Left colon (tissue), 2 donors: ENCODE measurements at regions of chr5 and their contacts with region 1.

Region 1: DNA sequence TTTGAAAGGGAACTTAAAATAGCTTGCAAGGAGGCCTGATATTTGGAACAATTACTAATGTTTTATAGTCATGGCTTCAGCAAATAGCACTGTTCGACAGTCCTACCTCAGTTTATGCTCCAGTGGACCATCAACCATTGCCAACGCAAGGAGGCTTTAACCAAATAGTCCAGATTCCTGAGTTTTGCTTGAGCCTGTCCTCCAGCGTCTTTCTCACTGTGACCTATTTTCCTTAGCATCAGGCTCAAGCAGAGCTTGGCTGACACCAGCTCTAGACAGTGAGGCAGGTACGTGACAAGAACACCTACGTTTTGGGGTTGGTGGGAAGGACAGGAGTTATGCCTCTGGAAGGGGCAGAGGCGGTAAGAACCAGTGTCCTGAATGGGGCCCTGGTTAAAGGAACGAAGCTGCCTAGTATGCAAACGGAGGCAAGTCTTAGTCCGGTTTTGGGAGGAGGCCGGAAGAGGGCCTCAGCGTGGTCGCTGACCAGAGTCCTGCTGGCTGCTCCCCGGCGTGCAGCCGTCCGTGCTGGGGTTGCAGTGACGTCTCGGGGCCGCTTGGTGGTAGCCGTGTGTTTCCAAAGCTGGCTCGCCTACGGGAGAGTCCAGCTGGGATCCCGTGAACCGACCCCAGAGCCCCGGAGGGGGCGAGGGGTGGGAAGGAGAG is 998 bp upstream of the FGF18 start:
- DNase-seq: peak; percentile 65 to 75
- ATAC-seq: peak; percentile 78

Region 2: DNA sequence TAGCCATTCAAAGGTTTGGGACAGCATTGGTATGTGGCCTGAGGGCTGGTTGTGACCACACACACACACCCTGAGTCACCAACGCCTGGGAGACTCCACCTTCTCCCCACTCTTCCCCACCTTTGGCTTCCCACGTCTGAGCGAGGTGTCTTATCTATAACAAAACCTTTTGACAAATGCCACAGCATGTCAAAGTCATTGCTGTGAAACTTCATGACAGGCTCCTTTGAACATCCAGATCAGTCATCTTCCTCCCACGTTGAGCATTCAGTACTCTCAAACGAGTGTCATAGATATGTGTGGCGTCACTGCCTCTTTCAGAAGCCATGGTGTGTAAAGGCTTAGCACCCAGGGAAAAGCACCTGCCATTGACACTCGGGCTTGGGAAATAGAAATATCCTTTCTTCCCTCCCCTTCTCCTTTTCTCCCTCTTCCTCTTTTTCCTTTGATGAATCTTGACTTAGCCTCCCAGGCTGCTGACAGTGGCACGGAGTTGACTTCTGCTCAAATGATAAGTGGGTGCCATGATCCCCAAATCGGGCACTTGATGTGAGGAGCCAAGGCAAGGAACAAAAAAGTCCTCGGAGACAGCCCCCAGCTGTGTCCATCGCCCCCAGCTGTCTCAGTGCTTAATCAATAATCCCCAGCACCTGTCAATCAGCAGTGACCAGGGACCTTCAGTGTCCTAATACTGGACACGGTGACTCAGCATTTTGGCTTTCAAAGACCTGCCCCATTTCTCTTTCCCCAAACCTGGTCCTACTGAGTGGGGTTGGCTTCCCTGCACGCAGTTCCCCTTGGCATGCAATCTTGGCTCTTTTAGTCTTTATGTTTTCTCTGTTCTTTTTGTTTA is 115.8 kb after region 1 on chr5:
- intact Hi-C with region 1: no loop called
- DNase-seq: no peak
- ATAC-seq: no peak

Region 3: GRCh38 chr5:171907725-171908343 is 489.4 kb after region 1 on chr5:
- intact Hi-C with region 1: loop called (anchors 5 to 10 kb)
- DNase-seq: peak in 1 of 2 donors; percentile 29
- ATAC-seq: peak; percentile 79